CD8-positive, alpha-beta T cell (primary cell): ENCODE measurements at regions of chr3 and their contacts with region 1.

Region 1: GRCh38 chr3:138594150-138594934 is at the start of gene CEP70:
- DNase-seq: peak; percentile 83 to 96 (median 91)
- ATAC-seq: peak; percentile 93
- H3K4me3 ChIP-seq: peak within 1 kb of the TSS; percentile 83 to 93
- H3K4me3 Mint-ChIP-seq: peak within 1 kb of the TSS; percentile 94
- H3K27ac ChIP-seq: peak within 1 kb of the TSS; percentile 90 to 95
- H3K27ac Mint-ChIP-seq: peak within 1 kb of the TSS; percentile 99
- H3K4me1 ChIP-seq: no peaks in the 10 kb centered on the region
- H3K4me1 Mint-ChIP-seq: peaks cover 14% of the 10 kb centered on the region
- H3K27me3 ChIP-seq: no peaks in the 10 kb centered on the region
- H3K27me3 Mint-ChIP-seq: no peaks in the 10 kb centered on the region
- CTCF ChIP-seq: peak; percentile 86
- total RNA-seq, gene CEP70: 29.5 to 31.0 TPM

Region 2: DNA sequence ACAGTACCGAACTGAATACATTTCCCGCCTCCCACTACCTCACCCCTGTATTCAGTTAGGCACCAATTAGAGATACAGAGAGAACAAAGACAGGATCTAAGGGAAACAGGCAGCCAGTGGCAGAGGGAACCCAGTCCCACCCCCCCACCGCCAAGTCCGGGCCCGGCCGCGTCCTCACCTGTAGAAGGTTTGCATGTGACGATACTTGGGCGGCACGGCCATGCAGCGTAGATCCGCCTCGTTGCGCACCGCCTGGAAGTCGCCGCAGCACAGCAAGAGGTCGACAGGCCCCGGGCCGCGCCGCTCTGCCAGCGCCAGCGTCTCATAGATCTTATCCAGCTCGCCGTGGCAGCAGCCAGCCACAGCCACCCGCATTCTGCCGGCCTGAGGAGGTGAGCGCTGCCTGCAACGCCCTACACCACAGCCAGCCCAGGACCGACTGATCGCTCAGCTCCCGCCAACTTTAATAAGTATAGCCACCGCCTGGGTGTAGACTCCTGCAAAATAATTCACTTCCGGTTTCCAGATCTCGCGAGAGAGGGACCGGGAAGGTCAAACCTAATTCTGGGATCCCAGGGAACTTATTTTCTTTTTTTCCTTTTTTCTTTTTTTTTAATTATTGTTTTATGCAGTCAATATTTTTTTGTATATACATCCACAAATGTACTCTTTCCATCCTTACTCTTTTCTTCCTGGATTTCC is 419.8 kb before region 1 on chr3 and contains the start of gene DBR1:
- CTCF ChIA-PET with region 1: no interaction called
- POLR2A ChIA-PET with region 1: interaction called, 4 read pairs
- intact Hi-C with region 1: loop called in 1 of 2 experiments (anchors 2 kb)
- DNase-seq: peak; percentile 51 to 89 (median 74)
- ATAC-seq: peak; percentile 87
- H3K4me3 ChIP-seq: peak within 1 kb of the TSS; percentile 76
- H3K4me3 Mint-ChIP-seq: peak within 1 kb of the TSS; percentile 99
- H3K27ac ChIP-seq: peak within 1 kb of the TSS; percentile 71 to 79
- H3K27ac Mint-ChIP-seq: peak within 1 kb of the TSS; percentile 98
- H3K4me1 ChIP-seq: peaks cover 21% of the 10 kb centered on the region
- H3K4me1 Mint-ChIP-seq: peaks cover 40% of the 10 kb centered on the region
- H3K27me3 ChIP-seq: no peaks in the 10 kb centered on the region
- H3K27me3 Mint-ChIP-seq: no peaks in the 10 kb centered on the region
- CTCF ChIP-seq: no peak
- total RNA-seq, gene DBR1: 31.2 to 31.9 TPM

Region 3: GRCh38 chr3:138417559-138417982 is 176.8 kb before region 1 on chr3:
- CTCF ChIA-PET with region 1: interaction called, 11 read pairs
- POLR2A ChIA-PET with region 1: no interaction called
- intact Hi-C with region 1: no loop called
- DNase-seq: peak; percentile 29 to 71 (median 63)
- ATAC-seq: peak; percentile 69
- H3K4me3 ChIP-seq: no peak overlapping the region
- H3K4me3 Mint-ChIP-seq: no peak overlapping the region
- H3K27ac ChIP-seq: no peak overlapping the region
- H3K27ac Mint-ChIP-seq: no peak overlapping the region
- H3K4me1 ChIP-seq: no peaks in the 10 kb centered on the region
- H3K4me1 Mint-ChIP-seq: no peaks in the 10 kb centered on the region
- H3K27me3 ChIP-seq: peaks cover 0 to 3% of the 10 kb centered on the region in 2 experiments
- H3K27me3 Mint-ChIP-seq: peaks cover 7% of the 10 kb centered on the region
- CTCF ChIP-seq: peak; percentile 71

Region 4: DNA sequence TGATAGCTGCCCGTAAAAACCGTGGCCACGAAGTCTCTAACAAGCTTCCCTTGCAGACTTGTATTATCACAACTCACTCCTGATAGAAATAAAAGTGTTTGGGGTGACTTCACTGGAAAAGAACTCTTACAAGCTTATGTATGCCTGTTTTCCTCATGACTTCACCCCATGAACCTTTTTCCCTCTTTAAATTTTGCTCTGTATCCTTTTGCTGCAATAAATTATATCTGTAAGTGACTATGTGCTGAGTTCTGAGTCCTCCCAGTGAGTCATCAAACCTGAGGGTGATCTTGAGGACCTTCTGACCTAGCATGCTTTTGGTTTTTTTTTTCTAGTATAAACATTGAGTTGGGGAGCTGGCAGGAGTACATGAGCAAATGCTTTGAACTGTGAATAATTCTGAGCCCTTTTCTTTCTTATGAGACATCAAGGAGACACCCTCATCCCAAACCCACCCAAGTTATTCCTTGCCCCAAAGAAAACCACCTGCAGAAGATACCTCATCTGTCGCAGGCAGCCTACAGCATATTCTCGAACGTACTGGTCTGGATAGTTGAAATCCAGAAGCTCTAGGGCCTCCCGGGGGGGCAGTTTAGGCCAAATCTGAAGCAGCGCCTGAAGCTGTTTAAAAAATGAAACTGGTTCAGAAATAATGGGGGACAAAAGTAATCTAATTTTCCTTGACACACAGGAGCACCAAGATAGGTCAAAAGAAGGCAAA is 100.1 kb after region 1 on chr3:
- CTCF ChIA-PET with region 1: interaction called, 10 read pairs
- POLR2A ChIA-PET with region 1: no interaction called
- intact Hi-C with region 1: loop called in 1 of 2 experiments (anchors 1 kb)
- DNase-seq: no peak
- ATAC-seq: no peak
- H3K4me3 ChIP-seq: no peak overlapping the region
- H3K4me3 Mint-ChIP-seq: no peak overlapping the region
- H3K27ac ChIP-seq: no peak overlapping the region
- H3K27ac Mint-ChIP-seq: no peak overlapping the region
- H3K4me1 ChIP-seq: no peaks in the 10 kb centered on the region
- H3K4me1 Mint-ChIP-seq: no peaks in the 10 kb centered on the region
- H3K27me3 ChIP-seq: no peaks in the 10 kb centered on the region
- H3K27me3 Mint-ChIP-seq: no peaks in the 10 kb centered on the region
- CTCF ChIP-seq: no peak

Region 5: DNA sequence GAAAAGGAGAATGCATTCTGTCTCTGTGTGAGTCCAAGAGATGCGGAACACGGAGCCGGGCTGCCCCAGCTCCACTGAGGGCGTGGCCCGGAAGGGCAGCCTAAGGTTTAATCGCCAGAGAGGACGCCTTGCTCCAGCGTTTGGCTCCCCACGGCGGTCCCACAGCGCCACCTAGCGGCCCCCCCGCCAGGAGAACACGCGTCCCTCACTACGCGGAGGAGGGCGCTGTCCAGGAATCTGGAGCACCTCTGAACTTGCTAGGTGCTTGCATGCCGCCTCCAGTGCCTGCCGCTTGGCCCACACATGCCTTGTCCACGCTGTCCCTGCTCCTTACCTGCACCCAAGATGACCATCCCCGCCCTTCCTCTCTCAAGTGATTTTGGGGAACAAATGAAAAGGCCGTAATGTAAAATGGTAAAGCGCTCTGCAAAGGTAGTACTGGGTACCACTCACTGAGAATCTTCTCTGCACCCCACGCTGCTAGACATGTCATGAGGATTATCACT is 735.1 kb after region 1 on chr3:
- CTCF ChIA-PET with region 1: interaction called, 4 read pairs
- POLR2A ChIA-PET with region 1: no interaction called
- intact Hi-C with region 1: loop called in 1 of 2 experiments (anchors 5 kb)
- DNase-seq: peak; percentile 68 to 92 (median 85)
- ATAC-seq: peak; percentile 96
- H3K4me3 ChIP-seq: peak overlapping the region; percentile 21 to 36
- H3K4me3 Mint-ChIP-seq: peak overlapping the region; percentile 69
- H3K27ac ChIP-seq: no peak overlapping the region
- H3K27ac Mint-ChIP-seq: no peak overlapping the region
- H3K4me1 ChIP-seq: peaks cover 9% of the 10 kb centered on the region
- H3K4me1 Mint-ChIP-seq: peaks cover 17% of the 10 kb centered on the region
- H3K27me3 ChIP-seq: peaks cover 3 to 4% of the 10 kb centered on the region in 2 experiments
- H3K27me3 Mint-ChIP-seq: peaks cover 34% of the 10 kb centered on the region
- CTCF ChIP-seq: peak; percentile 95